Right cardiac atrium (tissue), 5 donors: ENCODE measurements at regions of chr3 and their contacts with region 1.

Region 1: GRCh38 chr3:102229062-102229655 is 205.7 kb upstream of the ZPLD1 start:
- DNase-seq: peak; percentile 50 to 83 (median 69)
- ATAC-seq: peak; percentile 64 to 80
- H3K4me3 ChIP-seq: no peak overlapping the region
- H3K27ac ChIP-seq: no peak overlapping the region
- H3K4me1 ChIP-seq: no peaks in the 10 kb centered on the region
- H3K27me3 ChIP-seq: no peaks in the 10 kb centered on the region

Region 2: GRCh38 chr3:102129760-102130608 is 99.2 kb before region 1 on chr3:
- intact Hi-C with region 1: loop called in 1 of 4 experiments (anchors 10 kb)
- DNase-seq: peak in 1 of 3 donors; percentile 55
- ATAC-seq: peak; percentile 88 to 94
- H3K4me3 ChIP-seq: no peak overlapping the region
- H3K27ac ChIP-seq: no peak overlapping the region
- H3K4me1 ChIP-seq: no peaks in the 10 kb centered on the region
- H3K27me3 ChIP-seq: no peaks in the 10 kb centered on the region